Ovary (tissue), 10 donors: ENCODE measurements at regions of chrX and their contacts with region 1.

Region 1: DNA sequence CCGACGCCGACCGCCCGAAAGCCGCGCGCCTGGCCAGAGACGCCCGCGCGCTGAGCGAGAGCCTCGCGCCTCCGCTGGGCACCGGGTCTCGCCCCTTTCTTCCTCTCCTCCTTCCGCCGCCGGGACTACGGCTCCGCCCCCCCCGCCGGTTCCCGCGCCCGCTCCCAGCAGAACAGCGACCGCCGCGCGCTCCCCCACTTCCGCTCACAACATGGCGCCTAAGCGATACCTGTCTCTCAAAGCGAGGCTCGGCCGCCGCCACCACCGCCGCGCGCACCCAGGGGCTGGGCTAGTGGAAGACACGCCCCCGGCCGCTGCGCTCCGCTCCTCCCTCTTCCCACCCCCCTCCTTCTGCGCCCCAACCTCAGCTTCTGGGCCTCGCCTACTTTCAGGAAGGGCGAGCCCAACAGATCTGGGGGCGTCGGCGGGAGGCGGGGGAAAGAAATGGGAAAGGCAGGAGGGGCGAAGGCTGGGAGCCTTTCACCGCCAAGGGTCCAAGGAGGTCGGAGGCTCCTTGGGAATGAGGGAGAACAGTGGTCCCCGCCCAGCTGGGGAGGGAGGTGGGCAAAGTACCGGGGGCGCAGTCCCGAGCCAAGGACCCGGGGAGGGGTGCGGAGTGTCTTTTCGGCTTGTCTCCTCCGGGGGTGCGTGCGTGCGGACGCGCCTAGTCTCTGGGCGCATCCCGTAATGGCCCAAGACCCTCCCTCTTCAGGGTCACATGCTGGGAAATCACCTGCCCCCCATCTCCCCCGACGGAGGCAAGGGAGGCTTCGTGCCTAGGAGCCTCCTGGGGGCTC is at the start of gene RPS6KA3:
- DNase-seq: peak; percentile 86 to 92 (median 91)
- H3K4me3 ChIP-seq: peak within 1 kb of the TSS; percentile 43
- H3K27ac ChIP-seq: peak within 1 kb of the TSS; percentile 64 to 75
- H3K4me1 ChIP-seq: no peaks in the 10 kb centered on the region
- H3K27me3 ChIP-seq: no peaks in the 10 kb centered on the region
- CTCF ChIP-seq: no peak
- EP300 ChIP-seq: no peak
- POLR2A ChIP-seq: peak; percentile 54
- total RNA-seq, gene RPS6KA3: 17.2 to 30.3 (median 26.9) TPM

Region 2: DNA sequence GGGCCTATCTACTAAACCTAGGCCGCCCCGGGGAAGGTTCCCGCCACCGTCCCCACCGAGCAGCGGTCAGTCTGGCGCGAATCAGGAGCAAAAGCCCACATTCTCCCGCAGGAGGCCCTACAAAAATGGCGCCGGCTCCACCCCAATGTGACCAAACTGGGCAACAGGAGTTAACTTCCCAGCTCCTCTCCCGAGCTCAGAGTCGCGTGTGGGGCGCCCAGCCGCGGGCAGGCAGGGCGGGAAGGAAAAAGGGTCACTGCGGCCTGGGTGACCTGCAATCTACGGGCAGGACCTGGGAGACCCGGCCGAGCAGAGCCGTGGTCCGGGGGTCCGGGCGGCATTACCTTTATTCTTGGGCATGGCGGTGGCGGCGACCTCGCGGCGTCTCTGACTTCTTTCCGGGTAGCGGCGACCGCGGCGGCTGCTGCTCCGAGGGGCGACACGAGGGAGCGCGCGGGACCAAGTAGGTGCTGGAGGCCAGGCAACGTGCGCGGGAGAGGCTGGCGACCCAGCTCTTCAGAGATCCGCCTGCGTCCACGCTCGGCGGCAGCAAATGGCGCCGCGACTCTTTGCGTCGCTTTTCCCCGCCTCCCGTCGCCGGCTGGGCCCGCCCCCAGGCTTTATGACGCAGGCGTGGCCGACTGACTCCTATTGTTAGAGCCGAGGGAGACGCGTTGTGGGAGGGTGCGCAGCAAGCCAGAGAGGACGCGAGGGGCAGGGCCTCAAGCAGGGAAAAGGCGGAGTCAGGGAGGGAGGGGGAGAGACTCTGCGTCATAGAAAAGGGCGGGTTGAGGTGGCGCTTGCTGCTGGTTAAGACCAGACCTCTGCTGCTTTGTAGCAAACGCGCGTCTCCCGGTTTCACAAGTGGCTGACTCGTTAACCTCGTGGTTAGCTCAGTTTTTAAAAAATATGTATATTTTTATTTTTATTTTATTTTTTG is 125.5 kb before region 1 on chrX and contains the start of gene EIF1AX:
- intact Hi-C with region 1: loop called in 1 of 4 experiments (anchors 5 kb)
- DNase-seq: peak; percentile 99
- H3K4me3 ChIP-seq: peak within 1 kb of the TSS; percentile 65
- H3K27ac ChIP-seq: peak within 1 kb of the TSS; percentile 87 to 93
- H3K4me1 ChIP-seq: peaks cover 8% of the 10 kb centered on the region
- H3K27me3 ChIP-seq: no peaks in the 10 kb centered on the region
- CTCF ChIP-seq: peak in 1 of 3 donors; percentile 39
- EP300 ChIP-seq: peak; percentile 2
- POLR2A ChIP-seq: peak; percentile 96
- total RNA-seq, gene EIF1AX: 67.1 to 151 (median 112) TPM

Region 3: GRCh38 chrX:20244931-20245330 is 22.1 kb before region 1 on chrX:
- intact Hi-C with region 1: no loop called
- DNase-seq: peak in 4 of 5 donors; percentile 34 to 56 (median 49)
- H3K4me3 ChIP-seq: no peak overlapping the region
- H3K27ac ChIP-seq: no peak overlapping the region
- H3K4me1 ChIP-seq: no peaks in the 10 kb centered on the region
- H3K27me3 ChIP-seq: no peaks in the 10 kb centered on the region
- CTCF ChIP-seq: no peak
- EP300 ChIP-seq: no peak
- POLR2A ChIP-seq: no peak